ENCODE measurements at regions of chr6 and their contacts with region 1.

Region 1: DNA sequence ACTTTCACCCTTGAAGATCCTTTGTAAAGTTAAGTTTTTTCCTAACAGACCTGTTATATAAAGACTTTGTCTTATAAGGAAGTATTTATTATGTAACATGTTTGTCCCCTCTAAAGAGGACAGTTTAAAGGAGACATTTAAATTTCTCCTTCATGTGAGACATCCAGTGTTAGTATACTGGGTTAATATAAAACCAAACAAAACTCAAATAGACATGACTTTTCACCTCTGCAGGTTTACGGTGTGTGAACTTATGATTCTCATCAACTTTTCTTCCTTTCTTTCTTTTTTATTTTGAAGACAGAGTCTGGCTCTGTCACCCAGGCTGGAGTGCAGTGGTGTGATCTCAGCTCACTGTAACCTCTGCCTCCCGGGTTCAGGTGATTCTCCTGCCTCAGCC is 17.4 kb upstream of the MPC1 start:
- DNase-seq: no peak
- H3K4me3 ChIP-seq: no peak overlapping the region
- H3K4me3 Mint-ChIP-seq: no peak overlapping the region
- H3K27ac Mint-ChIP-seq: no peak overlapping the region
- H3K4me1 ChIP-seq: no peaks in the 10 kb centered on the region
- H3K4me1 Mint-ChIP-seq: peaks cover 5% of the 10 kb centered on the region
- H3K27me3 ChIP-seq: no peaks in the 10 kb centered on the region
- H3K27me3 Mint-ChIP-seq: no peaks in the 10 kb centered on the region
- CTCF ChIP-seq: no peak

Region 2: DNA sequence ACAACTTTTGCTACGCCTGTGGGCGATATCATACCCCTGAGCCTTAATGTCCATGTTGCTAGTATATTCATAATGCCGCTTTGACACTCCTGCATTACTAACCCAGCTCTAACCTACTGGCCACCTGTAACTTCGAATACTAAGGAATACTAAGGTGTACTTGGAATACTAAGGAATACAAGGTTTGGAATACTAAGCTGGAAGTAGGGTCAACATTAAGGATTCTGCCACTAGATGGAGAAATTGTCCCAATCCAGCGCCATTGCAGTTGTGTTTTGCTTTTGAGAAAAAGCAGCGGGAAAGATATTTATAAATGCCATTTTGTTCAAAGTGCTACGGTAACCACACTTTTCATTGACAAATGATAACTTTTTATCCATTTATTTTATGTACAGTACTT is 243.2 kb before region 1 on chr6:
- CTCF ChIA-PET with region 1: interaction called, 6 read pairs
- POLR2A ChIA-PET with region 1: no interaction called
- intact Hi-C with region 1: loop called (anchors 1 kb)
- DNase-seq: no peak
- H3K4me3 ChIP-seq: no peak overlapping the region
- H3K4me3 Mint-ChIP-seq: no peak overlapping the region
- H3K27ac Mint-ChIP-seq: no peak overlapping the region
- H3K4me1 ChIP-seq: no peaks in the 10 kb centered on the region
- H3K4me1 Mint-ChIP-seq: no peaks in the 10 kb centered on the region
- H3K27me3 ChIP-seq: no peaks in the 10 kb centered on the region; the same call in 1 of the 2 replicates
- H3K27me3 Mint-ChIP-seq: peaks cover 2% of the 10 kb centered on the region
- CTCF ChIP-seq: peak; percentile 43 to 44

Region 3: GRCh38 chr6:166275714-166276166 is 124.4 kb before region 1 on chr6:
- CTCF ChIA-PET with region 1: interaction called, 23 read pairs
- POLR2A ChIA-PET with region 1: no interaction called
- intact Hi-C with region 1: loop called (anchors 1 kb)
- DNase-seq: peak in 1 of 2 experiments; percentile 84
- H3K4me3 ChIP-seq: no peak overlapping the region
- H3K4me3 Mint-ChIP-seq: no peak overlapping the region
- H3K27ac Mint-ChIP-seq: no peak overlapping the region
- H3K4me1 ChIP-seq: no peaks in the 10 kb centered on the region
- H3K4me1 Mint-ChIP-seq: no peaks in the 10 kb centered on the region
- H3K27me3 ChIP-seq: no peaks in the 10 kb centered on the region
- H3K27me3 Mint-ChIP-seq: no peaks in the 10 kb centered on the region
- CTCF ChIP-seq: peak; percentile 96 to 99

Region 4: GRCh38 chr6:166313255-166314070 is 86.7 kb before region 1 on chr6:
- CTCF ChIA-PET with region 1: interaction called, 4 read pairs
- POLR2A ChIA-PET with region 1: no interaction called
- intact Hi-C with region 1: loop called (anchors 1 kb)
- DNase-seq: peak in 1 of 2 experiments; percentile 41
- H3K4me3 ChIP-seq: no peak overlapping the region
- H3K4me3 Mint-ChIP-seq: no peak overlapping the region
- H3K27ac Mint-ChIP-seq: no peak overlapping the region
- H3K4me1 ChIP-seq: 0 out of 2 replicates have a peak, but pooled peaks cover 3% of the 10 kb centered on the region
- H3K4me1 Mint-ChIP-seq: peaks cover 6% of the 10 kb centered on the region
- H3K27me3 ChIP-seq: no peaks in the 10 kb centered on the region
- H3K27me3 Mint-ChIP-seq: no peaks in the 10 kb centered on the region
- CTCF ChIP-seq: peak; percentile 64 to 77

Region 5: GRCh38 chr6:166435574-166435973 is 35.4 kb after region 1 on chr6:
- CTCF ChIA-PET with region 1: no interaction called
- POLR2A ChIA-PET with region 1: no interaction called
- intact Hi-C with region 1: no loop called
- DNase-seq: no peak
- H3K4me3 ChIP-seq: no peak overlapping the region
- H3K4me3 Mint-ChIP-seq: no peak overlapping the region
- H3K27ac Mint-ChIP-seq: no peak overlapping the region
- H3K4me1 ChIP-seq: no peaks in the 10 kb centered on the region
- H3K4me1 Mint-ChIP-seq: no peaks in the 10 kb centered on the region
- H3K27me3 ChIP-seq: no peaks in the 10 kb centered on the region; the same call in 1 of the 2 replicates
- H3K27me3 Mint-ChIP-seq: peaks cover 8% of the 10 kb centered on the region
- CTCF ChIP-seq: no peak

Measured in Caco-2 (cell line).